MCF 10A (cell line): ENCODE measurements at regions of chr11 and their contacts with region 1.

Region 1: DNA sequence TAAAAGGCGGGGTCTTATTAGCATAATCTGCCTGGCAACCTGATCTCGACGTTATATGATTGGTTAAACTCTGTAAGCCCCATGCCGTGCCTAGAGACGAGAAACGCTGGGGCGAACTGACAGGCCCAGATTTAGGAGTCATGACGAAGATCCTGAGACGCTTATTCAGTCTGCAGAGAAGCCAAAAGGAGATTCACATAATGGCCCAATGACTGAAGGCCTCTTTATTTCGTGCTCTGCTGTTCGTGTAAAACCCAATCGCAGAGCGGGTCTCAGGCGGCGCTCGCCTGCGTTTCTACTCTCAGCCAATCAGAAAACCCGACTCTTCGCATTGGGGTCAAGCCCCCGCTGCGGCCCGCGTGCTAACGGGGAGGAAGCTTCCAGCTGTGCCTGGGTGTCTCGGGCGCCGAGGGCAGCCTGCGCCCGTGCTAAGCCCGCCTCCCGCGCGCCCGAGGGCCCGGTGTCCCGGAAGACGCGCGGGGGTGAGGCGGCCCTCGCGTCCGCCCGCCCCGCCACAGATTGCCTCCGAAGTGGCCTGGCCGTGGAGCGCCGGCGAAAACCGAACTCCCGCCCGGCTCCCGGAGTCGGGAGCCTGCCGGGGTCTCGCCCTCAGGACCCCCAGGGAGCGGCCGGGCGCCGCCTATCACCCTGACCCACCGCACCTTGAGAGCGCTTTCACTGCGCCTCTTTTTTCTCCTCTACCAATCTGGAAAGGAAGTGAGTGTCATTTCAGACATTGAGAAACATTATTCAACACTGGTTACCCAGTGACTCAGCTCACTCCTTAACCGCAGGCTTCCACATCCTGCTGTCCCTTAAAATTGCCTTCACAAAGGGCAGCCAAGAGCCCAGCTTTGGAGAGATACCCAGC is 446 bp upstream of the PRDM10 start:
- DNase-seq: peak; percentile 97
- H3K4me3 Mint-ChIP-seq: peak overlapping the region; percentile 97
- H3K27ac Mint-ChIP-seq: peak overlapping the region; percentile 100
- H3K4me1 Mint-ChIP-seq: peaks cover 12% of the 10 kb centered on the region
- H3K27me3 Mint-ChIP-seq: no peaks in the 10 kb centered on the region
- CTCF ChIP-seq: no peak

Region 2: GRCh38 chr11:129538323-129538722 is 464.8 kb before region 1 on chr11:
- CTCF ChIA-PET with region 1: no interaction called
- POLR2A ChIA-PET with region 1: no interaction called
- intact Hi-C with region 1: no loop called
- DNase-seq: no peak
- H3K4me3 Mint-ChIP-seq: no peak overlapping the region
- H3K27ac Mint-ChIP-seq: no peak overlapping the region
- H3K4me1 Mint-ChIP-seq: no peaks in the 10 kb centered on the region
- H3K27me3 Mint-ChIP-seq: peaks cover 20% of the 10 kb centered on the region
- CTCF ChIP-seq: no peak

Region 3: DNA sequence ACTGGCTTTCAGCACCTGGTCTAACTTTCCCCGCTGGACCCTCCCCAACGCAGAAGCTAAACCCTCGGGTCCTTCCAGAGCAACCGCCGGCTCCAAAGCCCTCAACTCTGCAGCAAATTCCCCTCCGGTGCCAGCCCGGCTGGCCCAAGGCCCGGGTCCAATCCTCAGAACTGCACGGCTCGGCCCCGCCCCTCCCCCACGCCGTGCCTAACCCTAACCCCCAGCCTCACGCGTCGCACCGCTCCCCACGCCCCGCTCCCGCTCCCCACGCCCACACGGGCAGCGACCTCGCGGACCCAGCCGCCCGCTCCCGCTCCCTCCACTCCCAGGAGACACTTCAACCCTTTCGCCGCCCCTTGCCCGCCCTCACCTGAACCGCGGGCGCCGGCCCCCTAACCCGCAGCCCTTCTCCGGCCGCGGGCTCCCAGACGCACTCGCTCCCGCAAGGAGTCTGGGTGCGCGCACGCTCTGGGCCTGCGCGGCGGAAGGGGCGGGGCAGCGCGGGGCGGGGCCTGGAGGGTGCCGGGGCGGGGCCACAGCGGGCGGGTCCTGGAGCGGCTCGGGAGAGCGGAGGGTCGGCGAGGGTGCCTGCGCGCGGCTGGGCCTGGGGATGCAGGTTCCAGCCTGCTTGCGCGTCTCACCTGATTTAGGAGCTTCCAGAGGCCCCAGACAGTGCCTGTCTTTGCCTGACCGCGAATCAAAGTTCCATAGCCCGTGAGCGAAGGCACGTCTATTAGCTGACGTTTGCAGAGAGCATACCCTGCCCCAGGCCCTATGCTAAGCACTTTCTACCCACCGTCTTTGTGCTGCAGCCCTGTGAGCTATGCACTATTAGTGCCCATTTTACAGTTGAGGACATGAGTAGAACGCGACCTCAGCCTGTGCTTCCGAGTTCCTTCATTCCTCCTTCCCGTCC is 107.7 kb before region 1 on chr11 and contains the start of gene NFRKB:
- CTCF ChIA-PET with region 1: no interaction called
- POLR2A ChIA-PET with region 1: interaction called, 11 read pairs
- intact Hi-C with region 1: no loop called
- DNase-seq: peak; percentile 80
- H3K4me3 Mint-ChIP-seq: peak within 1 kb of the TSS; percentile 81
- H3K27ac Mint-ChIP-seq: peak within 1 kb of the TSS; percentile 70
- H3K4me1 Mint-ChIP-seq: peaks cover 10% of the 10 kb centered on the region
- H3K27me3 Mint-ChIP-seq: no peaks in the 10 kb centered on the region
- CTCF ChIP-seq: no peak
- total RNA-seq, gene NFRKB: 34.0 and 37.4 TPM in 2 replicates

Region 4: DNA sequence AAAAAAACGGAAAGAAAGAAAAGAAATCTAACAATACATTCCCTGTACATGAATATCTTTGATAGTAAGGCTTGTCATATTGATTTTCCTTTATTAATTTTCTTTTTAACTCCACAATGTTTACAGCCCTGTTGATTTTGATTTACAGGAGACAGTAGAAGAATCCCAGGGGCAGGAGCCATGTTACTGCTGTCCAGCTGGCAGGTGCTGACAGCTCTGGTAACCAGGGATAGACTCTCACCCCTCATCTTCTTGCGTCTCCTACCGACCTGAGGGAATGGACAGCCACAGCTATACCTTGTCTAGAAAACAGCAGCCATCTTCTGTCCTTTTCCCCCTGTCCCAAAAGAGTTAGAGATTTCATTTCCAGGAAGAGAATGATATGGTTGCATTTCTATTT is 37.8 kb before region 1 on chr11:
- CTCF ChIA-PET with region 1: no interaction called
- POLR2A ChIA-PET with region 1: no interaction called
- intact Hi-C with region 1: no loop called
- DNase-seq: no peak
- H3K4me3 Mint-ChIP-seq: no peak overlapping the region
- H3K27ac Mint-ChIP-seq: no peak overlapping the region
- H3K4me1 Mint-ChIP-seq: peaks cover 13% of the 10 kb centered on the region
- H3K27me3 Mint-ChIP-seq: no peaks in the 10 kb centered on the region
- CTCF ChIP-seq: no peak

Region 5: GRCh38 chr11:129992161-129992944 is 10.7 kb before region 1 on chr11:
- CTCF ChIA-PET with region 1: interaction called, 4 read pairs
- POLR2A ChIA-PET with region 1: interaction called, 35 read pairs
- intact Hi-C with region 1: loop called (anchors 1 kb)
- DNase-seq: peak; percentile 81
- H3K4me3 Mint-ChIP-seq: no peak overlapping the region
- H3K27ac Mint-ChIP-seq: no peak overlapping the region
- H3K4me1 Mint-ChIP-seq: peaks cover 24% of the 10 kb centered on the region
- H3K27me3 Mint-ChIP-seq: no peaks in the 10 kb centered on the region
- CTCF ChIP-seq: peak; percentile 32

Region 6: DNA sequence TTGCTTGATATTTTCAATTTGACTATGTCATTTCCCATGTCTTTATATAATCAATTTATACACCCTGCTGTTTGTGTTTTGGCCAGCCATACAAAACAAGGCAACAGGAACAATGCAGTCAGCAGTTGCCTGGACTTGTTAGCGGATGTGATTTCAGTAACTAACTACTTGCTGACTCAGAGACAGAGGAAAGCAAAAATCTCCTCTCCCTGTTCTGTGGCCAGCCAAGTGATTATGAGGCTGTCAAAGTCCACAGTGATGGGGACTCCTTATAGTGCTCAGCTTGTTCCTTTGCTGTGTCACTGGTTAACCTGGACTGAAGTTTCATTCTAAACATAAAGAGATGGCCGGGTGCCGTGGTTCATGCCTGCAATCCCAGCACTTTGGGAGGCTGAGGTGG is 34.0 kb after region 1 on chr11:
- CTCF ChIA-PET with region 1: interaction called, 4 read pairs
- POLR2A ChIA-PET with region 1: interaction called, 48 read pairs
- intact Hi-C with region 1: loop called (anchors 1 kb)
- DNase-seq: peak; percentile 87
- H3K4me3 Mint-ChIP-seq: no peak overlapping the region
- H3K27ac Mint-ChIP-seq: peak overlapping the region; percentile 3
- H3K4me1 Mint-ChIP-seq: peaks cover 15% of the 10 kb centered on the region
- H3K27me3 Mint-ChIP-seq: no peaks in the 10 kb centered on the region
- CTCF ChIP-seq: no peak

Region 7: GRCh38 chr11:130076778-130077481 is 73.8 kb after region 1 on chr11:
- CTCF ChIA-PET with region 1: interaction called, 24 read pairs
- POLR2A ChIA-PET with region 1: interaction called, 186 read pairs
- intact Hi-C with region 1: no loop called
- DNase-seq: no peak
- H3K4me3 Mint-ChIP-seq: no peak overlapping the region
- H3K27ac Mint-ChIP-seq: peak overlapping the region; percentile 80
- H3K4me1 Mint-ChIP-seq: peaks cover 34% of the 10 kb centered on the region
- H3K27me3 Mint-ChIP-seq: no peaks in the 10 kb centered on the region
- CTCF ChIP-seq: no peak

Region 8: GRCh38 chr11:130131961-130132850 is 129.1 kb after region 1 on chr11:
- CTCF ChIA-PET with region 1: interaction called, 21 read pairs
- POLR2A ChIA-PET with region 1: interaction called, 79 read pairs
- intact Hi-C with region 1: loop called (anchors 1 kb)
- DNase-seq: peak; percentile 78
- H3K4me3 Mint-ChIP-seq: no peak overlapping the region
- H3K27ac Mint-ChIP-seq: no peak overlapping the region
- H3K4me1 Mint-ChIP-seq: no peaks in the 10 kb centered on the region
- H3K27me3 Mint-ChIP-seq: no peaks in the 10 kb centered on the region
- CTCF ChIP-seq: peak; percentile 88

Region 9: DNA sequence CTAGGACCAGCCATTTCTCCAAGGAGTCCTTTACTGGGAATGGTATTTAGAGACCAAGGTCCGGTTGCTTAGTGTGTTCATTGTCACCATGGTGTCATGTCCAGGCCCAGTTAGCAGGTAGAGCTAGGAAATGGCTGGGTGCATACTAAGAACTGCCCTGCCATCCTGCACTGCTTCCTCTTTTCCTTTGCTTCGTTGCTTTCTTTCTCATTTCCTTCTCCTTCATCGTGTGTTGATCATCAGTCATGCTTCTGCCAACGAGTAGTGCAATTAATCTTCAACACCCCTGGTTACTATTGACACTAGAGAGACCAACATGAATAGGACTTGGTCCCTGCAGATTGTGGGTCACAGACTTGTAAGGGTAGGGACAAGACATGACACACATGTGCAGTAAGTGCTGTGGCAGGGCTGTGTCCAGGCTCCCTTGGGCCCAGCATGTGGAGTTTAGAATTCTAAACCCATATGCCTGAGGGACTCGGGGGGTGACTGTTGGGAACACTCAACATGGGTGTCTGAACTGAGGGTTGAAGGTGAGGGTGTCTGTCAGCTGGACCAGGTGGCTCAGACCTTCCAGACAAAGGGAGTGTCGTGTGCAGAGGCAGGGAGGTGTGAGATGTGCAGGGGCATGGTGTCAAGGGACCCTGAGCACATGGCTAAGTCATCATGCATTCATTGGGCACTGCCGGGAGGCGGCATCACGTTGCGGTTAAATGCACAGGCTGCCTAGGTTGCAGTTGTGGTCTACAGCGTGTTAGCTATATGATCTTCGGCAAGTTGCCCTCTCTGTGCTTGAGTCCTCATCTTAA is 199.1 kb after region 1 on chr11:
- CTCF ChIA-PET with region 1: no interaction called
- POLR2A ChIA-PET with region 1: no interaction called
- intact Hi-C with region 1: no loop called
- DNase-seq: no peak
- H3K4me3 Mint-ChIP-seq: no peak overlapping the region
- H3K27ac Mint-ChIP-seq: no peak overlapping the region
- H3K4me1 Mint-ChIP-seq: no peaks in the 10 kb centered on the region
- H3K27me3 Mint-ChIP-seq: no peaks in the 10 kb centered on the region
- CTCF ChIP-seq: no peak